Activated B cell treated with CpG ODN at 0.5 μM for 24 hours (primary cell): ENCODE measurements at regions of chr19 and their contacts with region 1.

Region 1: DNA sequence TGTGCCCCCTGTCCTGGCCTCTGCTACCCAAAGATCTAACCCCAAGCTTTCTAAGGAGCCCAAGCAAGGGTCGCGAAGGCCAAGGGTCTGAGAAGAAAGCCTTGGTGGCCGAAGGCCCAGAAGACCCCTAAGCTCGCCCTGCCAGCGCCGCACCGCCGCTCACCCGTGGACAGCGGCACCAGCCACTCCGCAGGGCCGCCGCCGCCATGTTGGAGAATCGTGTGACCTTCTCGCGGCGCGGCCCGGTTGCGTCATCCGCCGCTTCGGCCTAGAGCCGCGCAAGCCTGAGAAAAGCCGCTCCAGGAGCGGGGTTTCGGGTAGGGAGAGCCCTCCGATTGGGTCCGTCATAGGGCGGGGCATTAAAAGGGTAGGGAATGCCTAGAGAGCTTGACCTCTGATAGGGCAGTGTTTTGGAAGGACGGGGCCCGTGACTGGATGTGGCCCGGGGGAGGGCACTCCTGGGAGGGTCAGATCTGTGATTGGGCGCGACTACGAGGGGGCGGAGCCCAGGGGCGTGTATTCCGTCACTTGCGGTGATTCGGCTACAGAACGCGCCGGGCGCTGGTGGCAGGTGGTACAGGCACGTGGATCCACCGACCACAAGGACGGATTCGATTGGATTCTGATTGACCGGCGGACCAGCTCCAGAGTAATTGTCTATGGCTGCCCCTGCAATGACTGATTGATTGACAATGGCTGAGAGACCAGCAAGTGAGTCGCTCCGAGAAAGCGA is at the start of gene TIMM44:
- DNase-seq: peak; percentile 97
- ATAC-seq: peak; percentile 96
- H3K4me3 Mint-ChIP-seq: peak within 1 kb of the TSS; percentile 91
- H3K27ac Mint-ChIP-seq: peak within 1 kb of the TSS; percentile 97
- H3K4me1 Mint-ChIP-seq: peaks cover 33% of the 10 kb centered on the region
- H3K27me3 Mint-ChIP-seq: no peaks in the 10 kb centered on the region
- CTCF ChIP-seq: no peak
- total RNA-seq, gene TIMM44: 78.4 and 92.5 TPM in 2 replicates

Region 2: DNA sequence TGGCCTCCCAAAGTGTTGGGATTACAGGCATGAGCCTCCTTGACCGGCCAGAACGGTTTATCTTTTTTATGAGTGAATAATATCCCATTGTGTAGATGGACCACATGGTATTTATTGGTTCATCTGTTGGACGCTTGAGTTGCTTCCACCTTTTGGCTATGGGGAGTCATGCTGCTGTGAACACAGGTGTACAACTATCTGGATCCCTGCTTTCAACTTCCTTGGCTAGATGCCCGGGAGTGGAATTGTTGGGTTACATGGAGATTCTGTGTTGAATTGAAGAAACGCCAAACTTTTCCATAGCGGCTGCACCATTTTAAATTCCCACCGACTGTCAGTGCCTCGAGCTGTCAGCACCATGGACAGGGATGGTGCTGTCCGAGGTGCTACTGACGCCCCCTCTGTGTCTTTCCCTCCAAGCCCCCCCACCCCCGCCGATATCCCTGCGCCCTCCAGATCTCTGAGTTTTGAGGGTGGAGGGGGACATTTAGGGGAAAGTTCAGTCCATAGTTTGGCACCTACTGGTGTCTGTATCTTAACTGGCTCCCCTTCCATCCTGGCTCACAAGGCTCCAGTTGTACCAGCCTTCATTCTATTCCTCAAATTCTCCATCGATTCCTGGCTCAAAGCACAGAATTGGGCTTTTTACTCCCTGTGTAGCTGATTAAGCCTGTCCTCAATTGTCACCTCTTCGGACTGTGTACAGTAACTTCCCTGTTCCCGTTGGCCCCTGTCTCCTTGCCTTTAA is 380.8 kb before region 1 on chr19:
- CTCF ChIA-PET with region 1: interaction called, 8 read pairs
- POLR2A ChIA-PET with region 1: no interaction called
- intact Hi-C with region 1: loop called (anchors 5 kb)
- DNase-seq: no peak
- ATAC-seq: no peak
- H3K4me3 Mint-ChIP-seq: no peak overlapping the region
- H3K27ac Mint-ChIP-seq: no peak overlapping the region
- H3K4me1 Mint-ChIP-seq: no peaks in the 10 kb centered on the region
- H3K27me3 Mint-ChIP-seq: no peaks in the 10 kb centered on the region
- CTCF ChIP-seq: no peak

Region 3: DNA sequence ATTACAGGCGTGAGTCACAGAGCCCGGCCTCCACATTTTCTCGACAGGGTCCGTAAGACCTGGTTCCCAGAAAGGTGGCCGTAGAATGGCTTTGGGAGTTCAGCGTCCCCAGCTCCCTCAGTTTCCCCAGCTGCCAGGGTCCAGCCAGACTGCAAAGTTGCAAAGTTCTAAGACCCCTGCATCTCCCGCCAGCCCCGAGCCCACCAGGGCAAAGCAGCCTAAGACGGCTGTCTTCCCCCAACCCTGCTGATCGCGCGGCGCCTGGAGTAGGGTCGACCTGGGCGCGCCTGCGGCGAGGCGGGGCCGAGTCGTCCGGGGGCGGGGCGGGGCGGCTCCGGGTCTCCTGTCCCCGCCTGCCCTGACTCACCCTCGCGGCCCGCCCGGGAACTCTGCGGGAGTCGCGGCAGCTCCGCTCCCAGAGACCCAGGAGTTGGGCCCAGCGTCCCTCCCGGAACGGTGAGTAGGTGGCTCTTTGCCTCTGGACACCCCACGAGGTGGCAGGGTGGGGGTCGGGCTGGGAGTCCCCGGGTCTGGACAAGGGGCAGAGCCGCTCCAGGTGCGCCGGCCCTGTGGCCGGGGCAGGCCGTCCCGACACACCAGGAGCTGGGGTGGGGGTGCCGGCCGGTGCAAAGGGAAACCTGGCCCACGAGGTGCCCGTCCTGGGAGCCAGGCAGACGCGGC is 55.3 kb before region 1 on chr19 and contains the start of gene LRRC8E:
- CTCF ChIA-PET with region 1: no interaction called
- POLR2A ChIA-PET with region 1: no interaction called
- intact Hi-C with region 1: no loop called
- DNase-seq: no peak
- ATAC-seq: peak; percentile 71
- H3K4me3 Mint-ChIP-seq: no peak within 1 kb of the TSS
- H3K27ac Mint-ChIP-seq: no peak within 1 kb of the TSS
- H3K4me1 Mint-ChIP-seq: no peaks in the 10 kb centered on the region
- H3K27me3 Mint-ChIP-seq: peaks cover 16% of the 10 kb centered on the region
- CTCF ChIP-seq: no peak
- total RNA-seq, gene LRRC8E: not detected in 2 replicates

Region 4: DNA sequence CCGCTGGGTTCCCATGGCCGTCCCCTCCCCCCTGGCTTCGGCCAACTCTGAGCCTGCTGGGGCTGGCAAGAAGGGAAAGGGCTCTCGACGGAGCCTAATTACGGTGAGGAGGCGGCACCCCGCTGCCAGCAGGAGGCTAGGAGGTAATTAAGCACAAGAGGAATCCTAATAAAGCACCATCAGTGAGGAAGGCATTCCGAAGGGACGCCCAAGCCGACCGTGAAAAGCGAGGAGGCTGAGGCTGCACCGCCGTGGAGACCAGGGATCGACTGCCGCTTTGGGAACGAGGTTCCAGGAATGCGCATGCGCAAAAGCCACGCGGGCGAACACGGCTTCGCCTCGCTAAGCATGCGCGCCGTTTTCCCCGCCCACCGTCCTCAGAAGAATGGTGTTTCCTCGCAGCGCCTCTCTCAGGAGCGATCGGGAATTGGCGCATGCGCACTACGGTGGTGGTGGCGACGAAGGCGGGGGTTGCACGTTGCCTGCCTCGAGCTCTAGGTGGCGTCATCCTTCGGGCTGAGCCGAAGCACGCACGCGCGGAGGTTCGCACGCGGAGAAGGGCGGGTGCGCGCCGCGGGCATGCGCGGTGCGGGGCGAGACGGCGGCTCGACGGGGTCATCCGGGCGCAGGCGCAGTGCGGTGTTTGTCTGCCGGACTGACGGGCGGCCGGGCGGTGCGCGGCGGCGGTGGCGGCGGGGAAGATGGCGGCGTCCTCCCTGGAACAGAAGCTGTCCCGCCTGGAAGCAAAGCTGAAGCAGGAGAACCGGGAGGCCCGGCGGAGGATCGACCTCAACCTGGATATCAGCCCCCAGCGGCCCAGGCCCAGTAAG is 40.2 kb before region 1 on chr19 and contains the start of gene MAP2K7:
- CTCF ChIA-PET with region 1: interaction called, 3 read pairs
- POLR2A ChIA-PET with region 1: interaction called, 13 read pairs
- intact Hi-C with region 1: loop called (anchors 1 kb)
- DNase-seq: peak; percentile 99
- ATAC-seq: peak; percentile 91
- H3K4me3 Mint-ChIP-seq: peak within 1 kb of the TSS; percentile 89
- H3K27ac Mint-ChIP-seq: peak within 1 kb of the TSS; percentile 91
- H3K4me1 Mint-ChIP-seq: peaks cover 33% of the 10 kb centered on the region
- H3K27me3 Mint-ChIP-seq: no peaks in the 10 kb centered on the region
- CTCF ChIP-seq: no peak
- total RNA-seq, gene MAP2K7: 46.3 and 52.8 TPM in 2 replicates

Region 5: DNA sequence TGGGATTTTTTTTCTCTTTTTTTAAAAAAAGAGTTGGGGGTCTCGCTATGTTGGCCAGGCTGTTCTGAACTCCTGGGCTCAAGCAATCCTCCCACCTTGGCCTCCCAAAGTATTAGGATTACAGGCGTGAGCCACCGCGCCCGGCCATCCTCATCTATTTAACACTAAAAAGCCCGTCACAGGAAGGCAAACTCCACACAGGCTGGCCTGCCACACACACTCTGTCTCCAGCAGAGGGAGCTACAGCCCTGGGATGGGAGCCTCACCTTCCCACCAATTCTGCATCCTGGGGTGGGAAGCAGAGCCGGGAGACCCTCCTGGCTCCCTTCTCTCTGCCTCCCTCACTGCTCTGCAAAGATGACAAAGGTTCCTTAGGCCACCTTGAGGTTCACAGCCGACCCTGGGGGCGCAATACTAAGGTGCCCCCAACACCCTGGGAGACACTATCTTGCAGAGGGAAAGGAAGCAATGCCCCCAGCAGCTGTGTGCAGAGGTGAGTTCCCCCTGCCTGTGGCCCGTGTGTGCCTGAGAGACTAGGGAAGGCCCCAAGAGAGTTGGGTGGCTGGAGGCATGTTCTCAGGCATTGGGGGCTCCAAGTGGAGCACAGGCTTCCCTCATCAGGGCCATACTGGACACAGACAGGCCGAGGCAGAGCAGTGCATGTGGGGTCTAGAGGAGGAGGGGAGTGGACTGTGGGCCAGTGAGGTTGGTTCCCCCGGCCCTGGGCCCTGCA is 27.3 kb after region 1 on chr19:
- CTCF ChIA-PET with region 1: interaction called, 12 read pairs
- POLR2A ChIA-PET with region 1: interaction called, 4 read pairs
- intact Hi-C with region 1: no loop called
- DNase-seq: peak; percentile 17
- ATAC-seq: peak; percentile 56
- H3K4me3 Mint-ChIP-seq: no peak overlapping the region
- H3K27ac Mint-ChIP-seq: no peak overlapping the region
- H3K4me1 Mint-ChIP-seq: peaks cover 1% of the 10 kb centered on the region
- H3K27me3 Mint-ChIP-seq: no peaks in the 10 kb centered on the region
- CTCF ChIP-seq: no peak

Region 6: GRCh38 chr19:8208922-8209461 is 265.4 kb after region 1 on chr19 and contains the start of gene CERS4:
- CTCF ChIA-PET with region 1: no interaction called
- POLR2A ChIA-PET with region 1: interaction called, 9 read pairs
- intact Hi-C with region 1: loop called (anchors 5 kb)
- DNase-seq: peak; percentile 81
- ATAC-seq: peak; percentile 86
- H3K4me3 Mint-ChIP-seq: peak within 1 kb of the TSS; percentile 96
- H3K27ac Mint-ChIP-seq: peak within 1 kb of the TSS; percentile 81
- H3K4me1 Mint-ChIP-seq: peaks cover 53% of the 10 kb centered on the region
- H3K27me3 Mint-ChIP-seq: no peaks in the 10 kb centered on the region
- CTCF ChIP-seq: no peak
- total RNA-seq, gene CERS4: 112 and 114 TPM in 2 replicates

Region 7: GRCh38 chr19:8444645-8445487 is 501.3 kb after region 1 on chr19 and contains the start of gene HNRNPM:
- CTCF ChIA-PET with region 1: no interaction called
- POLR2A ChIA-PET with region 1: interaction called, 3 read pairs
- intact Hi-C with region 1: loop called (anchors 1 kb)
- DNase-seq: peak; percentile 100
- ATAC-seq: peak; percentile 94
- H3K4me3 Mint-ChIP-seq: peak within 1 kb of the TSS; percentile 98
- H3K27ac Mint-ChIP-seq: peak within 1 kb of the TSS; percentile 96
- H3K4me1 Mint-ChIP-seq: peaks cover 42% of the 10 kb centered on the region
- H3K27me3 Mint-ChIP-seq: no peaks in the 10 kb centered on the region
- CTCF ChIP-seq: no peak
- total RNA-seq, gene HNRNPM: 282 and 287 TPM in 2 replicates